Posterior vena cava (tissue), 2 donors: ENCODE measurements at regions of chr2 and their contacts with region 1.

Region 1: GRCh38 chr2:224381521-224382279 is 20.2 kb downstream of the FAM124B start:
- DNase-seq: no peak

Region 2: GRCh38 chr2:224449212-224450147 is 67.8 kb after region 1 on chr2:
- intact Hi-C with region 1: loop called in 1 of 2 experiments (anchors 10 kb)
- DNase-seq: no peak

Region 3: DNA sequence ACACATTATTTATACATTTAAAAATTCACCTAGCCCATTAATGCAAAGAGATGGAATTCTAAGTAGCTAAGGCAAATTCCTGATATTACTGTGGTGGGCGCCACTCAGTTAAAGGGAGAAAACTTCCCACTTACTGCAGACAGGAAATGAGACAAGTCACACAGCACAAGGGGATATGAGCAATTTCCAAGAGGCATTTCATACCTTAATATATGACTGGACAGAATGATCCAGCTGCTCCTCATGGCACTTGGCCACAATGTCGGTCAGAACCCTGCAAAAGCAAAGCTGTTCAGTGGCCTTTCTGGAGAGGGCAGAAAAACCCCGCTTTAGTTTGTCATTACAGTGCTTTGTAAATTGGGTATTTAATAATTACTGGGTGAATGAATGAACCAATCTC is 455.9 kb after region 1 on chr2:
- intact Hi-C with region 1: no loop called
- DNase-seq: no peak